ENCODE measurements at regions of chr1 and their contacts with region 1.

Region 1: GRCh38 chr1:58816072-58816746 is 32.4 kb upstream of the JUN start:
- DNase-seq: peak; percentile 88
- ATAC-seq: peak; percentile 88
- H3K4me3 ChIP-seq: peak overlapping the region; percentile 84 to 98 (median 88)
- H3K4me3 Mint-ChIP-seq: peak overlapping the region; percentile 95
- H3K27ac ChIP-seq: peak overlapping the region; percentile 88 to 91
- H3K27ac Mint-ChIP-seq: peak overlapping the region; percentile 96
- H3K4me1 ChIP-seq: peaks cover 29 to 45% of the 10 kb centered on the region in 2 donors
- H3K4me1 Mint-ChIP-seq: peaks cover 51% of the 10 kb centered on the region
- H3K27me3 ChIP-seq: no peaks in the 10 kb centered on the region
- H3K27me3 Mint-ChIP-seq: no peaks in the 10 kb centered on the region
- CTCF ChIP-seq: no peak

Region 2: DNA sequence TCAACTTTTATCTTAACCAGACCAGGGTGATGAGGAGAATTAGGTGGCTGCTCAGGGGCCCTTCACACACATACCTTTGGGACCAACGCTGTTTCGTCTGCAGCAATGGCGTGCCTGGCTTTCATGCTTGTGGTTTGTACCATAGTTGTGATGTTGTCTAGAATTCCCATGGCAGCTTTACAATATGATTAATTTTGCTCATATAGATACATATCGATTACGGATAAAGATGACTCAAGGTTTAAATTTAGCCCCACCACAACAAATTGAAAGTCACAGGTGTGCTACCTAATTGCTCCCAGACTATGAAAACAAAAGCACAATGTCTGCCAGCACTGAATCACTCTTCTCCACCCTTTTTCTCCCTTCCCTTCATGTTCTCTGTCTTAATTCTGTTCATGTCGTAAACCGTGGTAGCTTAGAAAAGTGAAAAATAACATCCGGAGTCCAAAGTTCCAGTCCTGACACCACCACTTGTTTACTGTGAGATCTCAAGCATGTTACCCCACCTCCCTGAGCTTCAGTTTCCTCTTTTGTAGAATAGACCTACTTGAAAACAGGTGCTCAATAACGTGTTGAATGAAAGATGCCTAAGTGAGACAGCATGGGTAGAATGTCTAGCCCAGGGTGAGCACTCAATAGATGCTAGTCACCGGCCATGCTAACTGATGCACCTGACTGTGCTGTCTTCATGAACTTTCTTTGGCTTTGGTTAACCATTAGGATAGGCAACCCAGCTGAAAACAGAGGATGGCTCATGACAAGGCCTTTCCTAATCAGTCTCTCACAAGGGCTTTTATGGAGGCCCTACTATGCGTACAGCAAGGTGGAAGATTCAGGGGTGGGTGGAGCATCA is 10.3 kb before region 1 on chr1:
- CTCF ChIA-PET with region 1: interaction called, 3 read pairs
- POLR2A ChIA-PET with region 1: interaction called, 8 read pairs
- intact Hi-C with region 1: loop called (anchors 1 kb)
- DNase-seq: peak; percentile 73
- ATAC-seq: peak; percentile 91
- H3K4me3 ChIP-seq: peak overlapping the region in 2 of 5 experiments; percentile 20 to 21
- H3K4me3 Mint-ChIP-seq: peak overlapping the region; percentile 72
- H3K27ac ChIP-seq: peak overlapping the region; percentile 41 to 89
- H3K27ac Mint-ChIP-seq: peak overlapping the region; percentile 93
- H3K4me1 ChIP-seq: peaks cover 49 to 51% of the 10 kb centered on the region in 2 donors
- H3K4me1 Mint-ChIP-seq: peaks cover 58% of the 10 kb centered on the region
- H3K27me3 ChIP-seq: no peaks in the 10 kb centered on the region
- H3K27me3 Mint-ChIP-seq: no peaks in the 10 kb centered on the region
- CTCF ChIP-seq: no peak

Region 3: GRCh38 chr1:58829861-58830260 is 13.7 kb after region 1 on chr1:
- CTCF ChIA-PET with region 1: no interaction called
- POLR2A ChIA-PET with region 1: no interaction called
- intact Hi-C with region 1: no loop called
- DNase-seq: no peak
- ATAC-seq: no peak
- H3K4me3 ChIP-seq: no peak overlapping the region
- H3K4me3 Mint-ChIP-seq: no peak overlapping the region
- H3K27ac ChIP-seq: no peak overlapping the region
- H3K27ac Mint-ChIP-seq: no peak overlapping the region
- H3K4me1 ChIP-seq: no peaks in the 10 kb centered on the region
- H3K4me1 Mint-ChIP-seq: no peaks in the 10 kb centered on the region
- H3K27me3 ChIP-seq: no peaks in the 10 kb centered on the region
- H3K27me3 Mint-ChIP-seq: no peaks in the 10 kb centered on the region
- CTCF ChIP-seq: no peak

Region 4: DNA sequence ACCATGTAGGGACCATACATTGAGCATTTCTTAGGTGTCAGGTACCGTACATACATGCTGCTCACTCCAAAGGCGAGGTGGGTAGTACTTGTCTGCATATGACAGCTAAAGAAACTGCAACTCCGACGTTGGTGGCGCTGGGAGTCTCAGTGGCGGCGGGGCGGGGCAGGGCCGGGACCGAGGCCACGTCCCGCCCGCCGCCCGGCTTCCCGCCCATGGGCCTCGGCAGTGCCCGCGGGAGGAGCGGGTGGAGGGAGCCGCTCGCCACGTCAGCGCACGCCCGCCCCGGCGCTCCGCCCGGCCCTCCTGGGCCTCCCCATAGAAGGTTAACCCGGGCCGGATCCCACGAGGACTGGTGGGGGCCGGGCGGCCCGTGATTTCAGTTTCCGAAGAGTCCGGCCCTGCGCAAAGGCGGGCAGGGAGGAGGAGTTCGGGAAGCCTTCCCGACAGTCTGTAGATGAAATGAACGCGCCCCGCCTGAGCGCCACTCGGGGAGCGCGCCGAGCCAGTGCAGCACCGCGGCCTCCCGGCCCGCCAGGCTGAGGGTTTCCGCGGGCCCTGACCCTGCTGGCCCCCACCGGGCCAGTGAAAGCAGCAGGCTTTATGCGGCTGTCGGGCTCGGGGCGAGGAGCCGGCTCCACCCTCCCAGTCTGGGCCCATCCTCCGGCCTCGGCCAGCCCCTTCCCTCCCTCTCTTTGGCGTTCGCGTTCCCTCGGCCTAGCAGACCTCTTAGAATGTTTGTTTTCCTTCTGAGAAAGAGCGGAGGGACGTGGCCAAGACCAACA is 87.5 kb after region 1 on chr1:
- CTCF ChIA-PET with region 1: no interaction called
- POLR2A ChIA-PET with region 1: no interaction called
- intact Hi-C with region 1: loop called (anchors 2 kb)
- DNase-seq: peak; percentile 77
- ATAC-seq: peak; percentile 88
- H3K4me3 ChIP-seq: peak overlapping the region; percentile 45 to 74 (median 60)
- H3K4me3 Mint-ChIP-seq: peak overlapping the region; percentile 85
- H3K27ac ChIP-seq: peak overlapping the region; percentile 49 to 82
- H3K27ac Mint-ChIP-seq: peak overlapping the region; percentile 86
- H3K4me1 ChIP-seq: peaks cover 10% of the 10 kb centered on the region in 2 donors
- H3K4me1 Mint-ChIP-seq: peaks cover 13% of the 10 kb centered on the region
- H3K27me3 ChIP-seq: no peaks in the 10 kb centered on the region
- H3K27me3 Mint-ChIP-seq: no peaks in the 10 kb centered on the region
- CTCF ChIP-seq: no peak

Region 5: DNA sequence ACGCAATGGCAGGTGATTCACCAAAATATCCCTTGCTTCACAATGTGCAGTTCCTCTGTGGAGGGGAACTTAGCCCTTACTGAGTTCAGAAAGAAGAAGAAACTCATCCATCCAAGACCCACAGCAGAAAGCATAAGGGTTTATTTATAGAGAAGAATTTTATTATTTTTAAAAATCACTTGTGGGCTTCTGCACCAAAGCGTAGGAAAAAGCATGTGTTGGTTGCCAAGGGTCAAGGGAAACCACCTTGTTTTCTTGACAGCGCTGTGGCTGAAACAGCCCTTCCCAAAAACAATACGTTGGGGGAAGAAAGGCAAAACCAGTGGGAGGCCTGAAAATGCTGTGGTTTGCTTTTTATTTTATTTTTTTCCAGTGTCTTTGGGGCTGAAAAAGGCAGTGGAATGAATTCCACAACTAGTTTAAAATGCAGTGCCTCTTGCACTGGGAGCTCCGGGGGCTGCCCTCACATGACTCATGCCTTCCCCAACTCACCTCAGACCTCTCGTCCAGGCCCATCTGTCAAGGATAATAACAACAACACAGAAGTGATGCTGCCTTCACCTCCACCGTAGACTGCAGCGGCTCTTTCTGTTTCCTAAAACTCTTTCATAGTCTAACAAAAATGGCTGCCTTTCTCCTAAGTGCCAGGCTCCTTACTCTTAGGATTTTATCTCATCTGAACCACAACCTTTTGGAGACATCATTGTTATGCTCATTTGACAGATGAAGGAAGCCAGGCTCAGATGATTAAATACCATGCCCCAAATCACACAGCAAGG is 191.8 kb after region 1 on chr1:
- CTCF ChIA-PET with region 1: no interaction called
- POLR2A ChIA-PET with region 1: no interaction called
- intact Hi-C with region 1: loop called (anchors 5 kb)
- DNase-seq: peak; percentile 57
- ATAC-seq: peak; percentile 68
- H3K4me3 ChIP-seq: peak overlapping the region in 3 of 5 experiments; percentile 0 to 44 (median 6)
- H3K4me3 Mint-ChIP-seq: peak overlapping the region; percentile 55
- H3K27ac ChIP-seq: peak overlapping the region; percentile 70 to 85
- H3K27ac Mint-ChIP-seq: peak overlapping the region; percentile 90
- H3K4me1 ChIP-seq: peaks cover 62 to 70% of the 10 kb centered on the region in 2 donors
- H3K4me1 Mint-ChIP-seq: peaks cover 80% of the 10 kb centered on the region
- H3K27me3 ChIP-seq: no peaks in the 10 kb centered on the region
- H3K27me3 Mint-ChIP-seq: no peaks in the 10 kb centered on the region
- CTCF ChIP-seq: no peak